Psoas muscle (tissue), 8 donors: ENCODE measurements at regions of chr17 and their contacts with region 1.

Region 1: GRCh38 chr17:6435968-6436367 is 1.0 kb upstream of the AIPL1 start:
- DNase-seq: peak; percentile 54 to 73
- ATAC-seq: peak; percentile 87 to 93 (median 90)
- H3K4me3 ChIP-seq: no peak overlapping the region
- H3K27ac ChIP-seq: no peak overlapping the region
- H3K4me1 ChIP-seq: no peaks in the 10 kb centered on the region
- H3K27me3 ChIP-seq: peaks cover 0 to 16% (median 3%) of the 10 kb centered on the region in 3 donors
- CTCF ChIP-seq: peak; percentile 79

Region 2: DNA sequence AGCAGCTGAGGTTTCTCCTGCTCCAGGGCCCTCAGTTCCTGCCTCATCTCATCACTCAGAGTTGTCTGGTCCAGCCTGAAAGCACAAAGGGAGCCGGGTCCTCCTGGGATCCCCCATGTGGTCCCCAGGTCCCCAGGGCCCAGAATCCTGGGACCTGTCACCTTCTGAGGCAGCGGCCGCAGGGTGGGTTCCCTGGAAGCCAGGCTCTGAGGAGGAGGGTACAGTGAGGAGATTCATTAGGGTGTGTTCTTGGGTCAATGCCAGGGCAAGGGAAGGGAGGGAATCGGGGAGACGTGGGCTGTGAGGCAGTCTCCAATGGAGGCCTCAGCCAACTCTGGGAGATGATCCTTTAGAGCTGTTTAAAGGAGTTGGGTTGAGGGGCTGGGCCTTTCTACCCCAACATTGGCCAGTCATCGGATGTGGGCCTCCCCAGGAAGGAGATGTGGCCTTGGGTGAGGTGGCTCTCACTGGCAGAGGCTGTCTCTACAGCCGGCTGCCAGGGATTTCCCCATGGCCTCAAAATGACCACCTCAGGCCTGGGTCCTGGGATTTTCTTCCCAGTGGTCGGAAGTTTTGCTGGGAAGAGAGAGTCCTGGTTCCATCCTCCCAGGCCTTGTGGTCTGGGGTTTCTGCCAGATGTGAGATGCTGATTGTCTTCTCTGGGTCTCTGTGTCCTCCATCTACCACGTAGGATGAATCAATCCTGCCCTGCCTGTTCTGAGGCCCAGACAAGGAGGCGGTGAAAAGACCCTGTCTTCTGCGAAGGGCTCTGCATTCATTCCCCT is 898.9 kb before region 1 on chr17:
- intact Hi-C with region 1: loop called in 1 of 2 experiments (anchors 5 kb)
- DNase-seq: no peak
- ATAC-seq: no peak
- H3K4me3 ChIP-seq: no peak overlapping the region
- H3K27ac ChIP-seq: no peak overlapping the region
- H3K4me1 ChIP-seq: no peaks in the 10 kb centered on the region
- H3K27me3 ChIP-seq: no peaks in the 10 kb centered on the region
- CTCF ChIP-seq: no peak